Left cardiac atrium (tissue), 4 donors: ENCODE measurements at regions of chr6 and their contacts with region 1.

Region 1: DNA sequence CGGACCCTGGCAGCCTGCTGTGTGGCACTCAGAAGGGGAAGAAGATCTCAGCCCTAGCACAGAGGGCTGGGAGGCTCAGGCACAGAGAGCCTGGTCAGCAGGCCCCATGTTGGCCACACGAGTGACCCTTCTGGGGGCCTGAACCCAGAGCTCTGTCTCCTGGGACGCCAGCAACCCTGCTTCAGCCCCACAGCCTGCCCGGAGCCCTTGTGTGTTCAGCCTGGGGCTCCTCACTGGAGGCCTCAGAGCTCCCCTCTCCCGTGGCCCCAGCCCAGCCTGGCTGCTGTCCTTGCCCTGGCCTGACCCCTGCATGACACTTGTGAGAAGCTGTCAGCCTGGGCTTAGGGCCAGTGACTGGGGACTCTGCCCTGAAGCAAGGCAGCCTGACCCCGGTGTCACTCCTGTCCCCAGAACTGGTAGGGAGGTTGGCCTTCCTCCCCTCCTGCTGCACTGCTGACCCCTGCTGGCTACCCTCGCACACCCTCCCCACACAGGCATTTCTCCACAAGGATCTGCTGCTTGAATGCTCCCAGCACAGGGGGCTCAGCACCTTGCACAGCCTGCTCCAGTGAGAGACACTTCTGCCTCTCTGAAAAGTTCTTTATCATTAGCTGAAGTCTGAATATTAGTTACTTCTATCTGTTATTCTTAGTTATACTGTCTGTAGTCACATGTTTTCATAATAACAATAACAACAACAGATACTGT is 15.4 kb upstream of the IP6K3 start:
- DNase-seq: peak; percentile 67
- ATAC-seq: peak; percentile 86 to 91

Region 2: DNA sequence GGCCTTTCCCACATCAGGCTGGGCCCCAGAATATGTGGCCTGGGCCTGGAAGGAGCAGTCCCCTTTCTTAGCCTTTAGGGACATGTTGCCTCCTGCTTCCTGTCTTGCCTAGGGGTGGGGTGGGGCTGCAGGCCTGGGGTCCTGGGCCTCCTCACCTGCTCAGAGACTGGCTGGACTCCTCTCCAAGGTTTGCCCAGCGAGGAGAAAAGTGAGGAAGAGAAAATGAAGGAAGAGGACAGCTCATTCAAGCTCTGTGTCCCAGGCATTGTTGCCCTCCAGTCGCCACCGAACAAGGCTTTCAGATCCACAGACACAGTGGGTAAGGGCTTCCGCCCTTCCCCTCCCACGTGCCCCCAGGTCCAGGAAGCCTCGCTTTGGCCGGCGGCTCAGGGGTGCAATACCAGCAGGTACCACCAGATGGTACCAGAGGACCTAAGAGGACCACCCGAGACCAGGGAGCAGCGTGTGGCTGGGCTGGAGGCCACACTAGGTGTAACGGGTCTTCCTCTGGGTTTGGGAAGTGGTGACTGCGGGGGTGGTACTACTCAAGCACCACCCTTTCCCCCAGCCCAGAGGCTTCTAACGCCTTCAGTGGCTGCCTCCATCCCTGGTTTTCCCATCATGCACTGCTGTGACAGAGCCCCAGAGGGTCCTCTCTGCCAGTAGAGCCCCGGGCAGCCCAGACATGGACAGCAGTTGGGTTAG is 176.5 kb before region 1 on chr6:
- intact Hi-C with region 1: loop called (anchors 5 kb)
- DNase-seq: peak; percentile 86
- ATAC-seq: peak; percentile 58 to 65

Region 3: GRCh38 chr6:33711140-33712129 is 50.6 kb before region 1 on chr6 and contains the start of gene UQCC2:
- intact Hi-C with region 1: loop called in 1 of 2 experiments (anchors 2 kb)
- DNase-seq: peak; percentile 99
- ATAC-seq: peak; percentile 97 to 99
- total RNA-seq, gene UQCC2: 183 to 203 TPM

Region 4: DNA sequence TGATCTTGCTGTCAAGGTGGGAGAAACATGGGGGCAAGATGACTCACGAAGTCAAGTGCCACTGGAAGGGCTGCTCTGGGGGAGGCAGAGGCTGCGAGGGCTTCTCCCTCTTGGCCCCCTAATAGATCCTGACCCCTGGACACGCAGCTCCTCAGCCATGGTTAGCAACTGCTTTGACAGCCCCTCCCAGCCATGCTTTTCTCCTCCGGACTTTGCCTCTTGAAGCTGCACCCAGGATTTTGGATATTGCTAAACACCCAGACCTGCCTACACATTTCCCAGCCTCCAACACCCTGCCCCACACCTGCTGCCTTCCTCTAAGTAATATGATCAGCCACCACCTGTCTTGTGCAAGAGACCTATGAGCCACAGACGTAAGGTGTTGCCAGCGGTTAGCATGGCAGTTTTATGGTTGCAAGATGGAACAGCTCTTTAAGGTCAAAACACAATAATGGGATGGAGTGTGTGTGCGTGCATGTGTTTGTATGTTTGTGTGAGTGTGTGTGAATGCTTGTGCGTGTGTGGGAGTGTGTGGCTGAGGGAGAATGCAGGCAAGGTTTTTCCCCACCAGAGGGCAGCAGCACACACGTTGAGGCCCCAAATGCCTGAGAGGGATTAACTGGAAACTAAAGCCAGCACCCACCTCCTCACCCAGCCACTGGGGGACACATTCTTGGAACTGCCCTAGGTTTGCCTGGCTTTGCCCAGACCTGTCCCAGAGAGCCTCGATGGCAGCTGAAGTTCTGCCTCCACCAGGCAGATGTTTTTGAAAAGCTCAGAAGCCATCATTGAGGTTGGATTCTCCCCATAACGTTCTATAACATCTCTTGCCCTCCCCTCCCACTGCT is 17.9 kb before region 1 on chr6:
- intact Hi-C with region 1: loop called in 1 of 2 experiments (anchors 2 kb)
- DNase-seq: peak; percentile 76
- ATAC-seq: peak; percentile 33 to 38

Region 5: GRCh38 chr6:33822575-33823395 is 60.7 kb after region 1 on chr6:
- intact Hi-C with region 1: no loop called
- DNase-seq: no peak
- ATAC-seq: no peak